ENCODE measurements at regions of chr18 and their contacts with region 1.

Region 1: DNA sequence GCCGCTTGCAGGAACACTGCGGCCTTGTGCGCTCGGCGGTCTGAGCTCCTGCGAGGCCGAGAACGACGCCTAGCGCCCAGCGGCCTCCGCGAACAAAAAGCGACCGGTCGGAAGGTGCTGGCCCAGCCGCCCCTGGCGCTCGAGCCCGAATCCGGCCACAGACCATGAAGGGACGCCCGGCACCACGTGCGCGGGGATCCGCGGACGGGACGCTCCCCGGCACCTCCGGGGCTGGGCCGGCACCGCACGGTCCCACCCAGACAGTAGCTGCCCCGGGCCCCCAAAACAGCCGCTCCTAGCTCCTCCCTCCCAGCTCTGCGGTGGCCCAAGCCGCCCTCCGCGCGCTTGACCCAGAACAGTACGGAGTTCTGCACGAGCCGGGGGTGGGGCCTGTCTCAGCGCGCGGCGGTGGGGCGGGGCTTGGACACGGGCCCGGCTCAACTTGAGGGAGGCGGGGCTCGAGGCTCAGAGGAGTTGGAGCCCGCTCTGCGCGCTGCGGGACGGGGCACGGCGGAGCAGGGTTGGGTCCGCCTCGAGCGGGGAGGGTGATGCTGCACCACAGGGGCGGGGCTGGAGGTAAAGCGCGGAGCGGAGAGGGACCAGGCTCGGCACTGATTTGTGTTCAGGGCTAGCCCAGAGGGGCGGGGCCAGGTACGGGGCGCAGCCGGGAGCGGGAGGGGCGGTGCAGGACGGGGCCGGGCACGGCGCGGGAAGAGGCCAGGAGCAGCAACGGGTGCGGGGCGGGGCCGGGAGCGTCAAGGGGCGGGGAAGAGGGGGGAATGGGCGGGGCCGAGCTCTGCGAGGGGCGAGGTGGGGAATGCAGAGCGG is 538 bp upstream of the IMPA2 start:
- DNase-seq: peak; percentile 99
- H3K4me3 Mint-ChIP-seq: peak overlapping the region; percentile 76
- H3K27ac Mint-ChIP-seq: peak overlapping the region; percentile 62
- H3K4me1 Mint-ChIP-seq: peaks cover 16% of the 10 kb centered on the region
- H3K27me3 Mint-ChIP-seq: peaks cover 7% of the 10 kb centered on the region

Region 2: GRCh38 chr18:10525371-10526210 is 1455.2 kb before region 1 on chr18 and contains the start of gene NAPG:
- CTCF ChIA-PET with region 1: no interaction called
- POLR2A ChIA-PET with region 1: no interaction called
- intact Hi-C with region 1: loop called (anchors 5 kb)
- DNase-seq: peak; percentile 93
- H3K4me3 Mint-ChIP-seq: peak within 1 kb of the TSS; percentile 94
- H3K27ac Mint-ChIP-seq: peak within 1 kb of the TSS; percentile 95
- H3K4me1 Mint-ChIP-seq: peaks cover 45% of the 10 kb centered on the region
- H3K27me3 Mint-ChIP-seq: no peaks in the 10 kb centered on the region
- total RNA-seq, gene NAPG: 31.8 to 32.7 TPM

Region 3: DNA sequence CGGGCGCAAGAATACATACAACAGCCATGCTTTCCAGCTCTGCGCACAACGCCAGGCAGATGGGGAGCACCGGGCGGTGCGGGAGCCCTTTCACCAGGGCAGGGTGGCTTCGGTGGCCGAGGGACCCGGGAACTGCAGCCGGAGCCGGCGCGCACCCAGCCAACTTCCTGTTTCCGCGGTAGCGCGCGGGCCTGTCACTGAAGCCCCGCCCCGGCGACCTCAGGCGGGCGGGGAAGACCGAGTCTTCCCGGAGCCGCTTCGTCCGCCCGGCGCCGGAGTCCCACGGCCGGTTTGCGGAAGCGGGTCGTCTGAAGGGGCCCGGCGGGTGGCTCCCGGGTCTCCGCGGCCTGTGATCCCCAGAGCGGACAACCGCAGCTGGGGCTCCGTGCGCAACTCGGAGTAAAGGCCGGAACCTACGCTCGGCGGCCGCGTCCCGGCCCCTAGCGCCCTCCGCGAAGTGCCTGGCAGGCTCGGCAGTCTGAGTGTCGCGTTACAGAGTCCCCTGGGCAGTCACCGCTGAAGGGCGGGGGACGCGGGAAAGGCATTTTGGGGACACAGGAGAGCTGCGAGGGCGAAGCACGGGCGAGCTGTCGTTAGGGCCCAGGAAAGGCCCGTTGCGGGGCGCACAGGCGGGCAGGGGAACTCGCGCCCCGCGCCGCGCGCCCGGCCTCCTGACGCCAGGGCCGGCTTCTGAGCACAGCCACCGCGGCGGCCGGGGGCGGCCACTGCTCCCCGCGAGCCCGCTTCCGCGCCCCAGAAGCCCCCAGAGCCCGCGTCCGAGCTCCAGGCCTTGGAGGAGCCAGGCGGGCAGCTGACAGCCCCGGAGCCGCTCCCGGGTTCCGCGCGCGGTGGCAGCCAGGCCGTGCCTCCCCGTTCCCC is 72.3 kb before region 1 on chr18 and contains the start of gene MPPE1:
- CTCF ChIA-PET with region 1: no interaction called
- POLR2A ChIA-PET with region 1: interaction called, 8 read pairs
- intact Hi-C with region 1: loop called (anchors 1 kb)
- DNase-seq: peak; percentile 91
- H3K4me3 Mint-ChIP-seq: peak within 1 kb of the TSS; percentile 92
- H3K27ac Mint-ChIP-seq: peak within 1 kb of the TSS; percentile 90
- H3K4me1 Mint-ChIP-seq: peaks cover 22% of the 10 kb centered on the region
- H3K27me3 Mint-ChIP-seq: no peaks in the 10 kb centered on the region
- total RNA-seq, gene MPPE1: 34.0 to 35.4 TPM

Region 4: GRCh38 chr18:11947214-11948191 is 33.3 kb before region 1 on chr18:
- CTCF ChIA-PET with region 1: interaction called, 5 read pairs
- POLR2A ChIA-PET with region 1: interaction called, 11 read pairs
- intact Hi-C with region 1: loop called (anchors 1 kb)
- DNase-seq: peak; percentile 76
- H3K4me3 Mint-ChIP-seq: peak overlapping the region; percentile 67
- H3K27ac Mint-ChIP-seq: peak overlapping the region; percentile 58
- H3K4me1 Mint-ChIP-seq: peaks cover 8% of the 10 kb centered on the region
- H3K27me3 Mint-ChIP-seq: peaks cover 4% of the 10 kb centered on the region

Region 5: DNA sequence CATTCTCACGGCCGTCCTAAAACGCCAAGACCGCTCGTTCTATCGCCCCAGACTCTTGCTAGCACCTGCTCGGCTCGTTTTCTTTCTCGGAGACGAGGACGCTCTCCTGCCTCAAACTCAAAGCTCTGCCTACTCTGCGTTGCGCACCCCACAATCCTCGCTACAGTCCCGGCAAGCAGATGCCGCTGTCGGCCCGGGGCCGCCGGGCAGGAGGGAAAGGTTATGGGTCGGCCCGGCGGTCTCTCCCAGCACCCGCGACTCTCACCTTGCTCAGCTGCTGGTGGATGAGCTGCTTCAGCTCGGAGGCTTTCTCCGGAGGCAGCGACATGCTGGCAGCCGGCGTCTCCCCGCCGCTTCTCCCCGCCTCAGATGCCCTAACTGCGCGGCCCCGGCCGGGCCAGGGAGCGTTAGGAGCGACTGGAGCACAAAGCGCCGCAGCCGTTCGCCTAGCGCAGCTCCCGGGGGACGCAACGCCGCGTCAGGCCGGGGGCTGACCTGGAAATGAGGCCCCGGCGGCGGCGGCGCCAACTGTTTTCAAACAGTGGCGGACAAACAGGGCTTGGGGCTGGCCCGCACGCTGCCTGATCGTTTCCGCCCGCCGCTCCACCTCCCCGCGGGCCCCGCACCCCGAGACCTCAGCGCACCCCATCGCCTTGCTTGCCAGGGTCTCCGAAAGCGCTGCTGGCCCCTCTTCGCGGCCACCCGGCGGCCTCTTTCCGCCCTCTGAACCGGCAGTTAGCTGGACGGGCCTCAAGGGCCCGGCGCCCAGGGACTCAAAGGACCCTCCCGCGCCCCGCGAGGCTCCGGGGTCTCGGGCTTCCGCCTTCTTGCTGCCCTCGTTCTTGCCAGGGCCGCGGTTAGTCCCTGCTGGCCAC is 721.7 kb after region 1 on chr18 and contains the starts of genes CEP76 and PSMG2:
- CTCF ChIA-PET with region 1: no interaction called
- POLR2A ChIA-PET with region 1: no interaction called
- intact Hi-C with region 1: loop called (anchors 2 kb)
- DNase-seq: peak; percentile 88
- H3K4me3 Mint-ChIP-seq: peak within 1 kb of the TSS; percentile 96
- H3K27ac Mint-ChIP-seq: peak within 1 kb of the TSS; percentile 98
- H3K4me1 Mint-ChIP-seq: peaks cover 35% of the 10 kb centered on the region
- H3K27me3 Mint-ChIP-seq: no peaks in the 10 kb centered on the region
- total RNA-seq, gene CEP76: 14.4 to 15.0 TPM
- total RNA-seq, gene PSMG2: 112 to 119 TPM

Measured in activated CD4-positive, alpha-beta memory T cell treated with anti-CD3 and anti-CD28 coated beads for 36 hours (primary cell).